WTC11 (cell line): ENCODE measurements at regions of chr6 and their contacts with region 1.

Region 1: GRCh38 chr6:2999618-3000557 is at the start of gene NQO2:
- DNase-seq: peak; percentile 97
- ATAC-seq: peak; percentile 88
- H3K4me3 Mint-ChIP-seq: peak within 1 kb of the TSS; percentile 90
- H3K27ac Mint-ChIP-seq: peak within 1 kb of the TSS; percentile 77
- H3K4me1 Mint-ChIP-seq: peaks cover 29% of the 10 kb centered on the region
- H3K27me3 Mint-ChIP-seq: no peaks in the 10 kb centered on the region; the same call in 1 of the 2 replicates
- CTCF ChIP-seq: no peak
- total RNA-seq, gene NQO2: 119 to 152 TPM (median 150 TPM) in 3 replicates

Region 2: DNA sequence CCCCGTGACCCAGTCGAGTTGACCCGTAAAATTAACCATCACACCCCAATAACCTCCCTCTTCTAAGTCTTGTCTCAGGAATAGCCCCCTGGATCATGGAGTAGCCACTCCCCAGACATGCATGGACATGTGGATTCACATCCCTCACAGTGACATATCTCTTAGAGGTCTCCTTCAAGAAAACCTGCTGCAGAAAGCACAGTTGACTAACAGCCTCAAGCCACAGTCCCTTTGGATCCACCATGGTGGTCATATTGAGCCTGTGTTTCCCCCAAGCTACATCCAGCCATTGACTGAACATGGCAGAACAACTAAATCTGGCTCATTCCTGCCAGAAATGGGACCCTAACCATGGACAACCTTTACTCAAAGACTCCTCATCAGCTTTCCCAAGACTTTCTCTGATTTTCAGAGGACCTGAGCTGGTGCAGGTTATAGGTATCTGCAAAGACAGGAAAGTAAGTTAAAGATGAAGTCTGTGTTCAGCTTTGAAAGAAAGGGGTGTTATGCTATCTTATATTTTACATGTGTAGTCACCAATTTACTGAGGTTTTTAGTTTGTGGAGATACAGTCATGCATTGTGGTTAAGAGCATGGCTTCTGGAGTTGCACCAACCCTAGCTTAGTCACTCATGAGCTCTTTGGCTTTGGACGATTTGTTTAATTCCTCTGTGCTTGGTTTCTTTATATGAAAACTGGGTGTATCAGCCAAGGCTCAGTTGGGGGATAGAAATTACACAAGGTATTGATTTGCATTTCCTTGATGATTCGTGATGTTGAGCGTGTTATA is 468.3 kb before region 1 on chr6:
- CTCF ChIA-PET with region 1: no interaction called
- POLR2A ChIA-PET with region 1: no interaction called
- DNase-seq: no peak
- ATAC-seq: no peak
- H3K4me3 Mint-ChIP-seq: no peak overlapping the region
- H3K27ac Mint-ChIP-seq: no peak overlapping the region
- H3K4me1 Mint-ChIP-seq: peaks cover 8% of the 10 kb centered on the region
- H3K27me3 Mint-ChIP-seq: no peaks in the 10 kb centered on the region; the same call in 1 of the 2 replicates
- CTCF ChIP-seq: no peak

Region 3: DNA sequence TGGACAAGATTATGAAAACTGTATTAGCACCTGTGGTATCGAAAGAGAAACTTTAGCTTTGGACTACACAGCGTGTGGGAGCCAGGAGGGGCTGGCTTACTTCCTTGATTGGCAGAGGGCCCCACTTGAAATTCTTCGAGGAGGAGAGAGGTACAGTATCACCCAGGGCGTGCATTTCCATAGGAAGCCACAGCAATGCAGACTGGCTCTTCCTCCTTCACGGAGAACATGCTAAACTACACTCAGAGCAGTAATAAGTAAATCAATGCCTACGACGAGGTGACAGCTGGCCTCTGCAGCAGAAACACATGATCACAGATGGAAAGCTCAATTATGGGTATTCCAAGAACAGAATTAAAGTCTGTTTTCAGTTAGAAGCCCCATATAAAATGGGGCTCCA is 293.3 kb before region 1 on chr6:
- CTCF ChIA-PET with region 1: no interaction called
- POLR2A ChIA-PET with region 1: no interaction called
- DNase-seq: no peak
- ATAC-seq: peak; percentile 72
- H3K4me3 Mint-ChIP-seq: no peak overlapping the region
- H3K27ac Mint-ChIP-seq: no peak overlapping the region
- H3K4me1 Mint-ChIP-seq: peaks cover 21% of the 10 kb centered on the region
- H3K27me3 Mint-ChIP-seq: peaks cover 3% of the 10 kb centered on the region; the same call in 1 of the 2 replicates
- CTCF ChIP-seq: no peak

Region 4: DNA sequence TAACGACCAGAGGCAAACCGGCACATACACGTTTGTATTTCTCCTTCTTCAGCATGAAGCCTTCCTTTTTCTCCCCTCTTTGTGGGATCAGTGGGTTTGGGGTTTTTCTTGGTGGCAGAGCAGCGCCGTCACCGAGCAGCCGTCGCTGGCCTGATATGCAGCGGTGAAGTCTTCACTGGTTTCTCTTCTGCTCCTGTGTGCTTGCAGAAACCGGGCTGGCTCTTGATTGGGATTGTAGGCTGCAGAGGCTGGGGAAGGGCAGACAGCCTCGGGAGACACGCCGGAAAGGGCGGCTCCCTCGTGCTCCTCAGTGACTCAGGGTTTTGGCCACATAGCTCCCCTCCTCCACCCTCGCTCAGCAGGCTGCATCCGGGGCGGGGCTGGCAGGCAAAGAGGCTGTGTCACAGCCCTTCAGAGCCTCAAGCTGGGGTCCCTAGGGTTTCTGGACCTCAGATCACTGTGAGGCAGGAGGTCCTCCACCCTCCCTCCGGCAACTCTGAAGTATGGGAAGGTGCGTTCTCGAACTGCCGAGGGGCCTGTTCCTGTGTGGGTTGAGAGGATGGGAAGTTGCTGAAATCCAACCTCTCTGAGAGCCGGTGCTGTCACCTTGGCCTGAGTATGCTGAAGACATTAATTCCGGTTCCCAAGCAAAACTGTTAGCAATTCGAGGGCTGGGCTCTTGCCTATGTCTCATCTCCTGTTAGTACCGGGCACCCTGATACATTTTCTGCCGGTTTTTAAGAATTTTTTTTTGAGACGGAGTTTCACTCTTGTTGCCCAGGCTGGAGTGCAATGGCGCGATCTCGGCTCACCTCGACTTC is 24.0 kb after region 1 on chr6:
- CTCF ChIA-PET with region 1: interaction called, 16 read pairs
- POLR2A ChIA-PET with region 1: interaction called, 8 read pairs
- DNase-seq: peak; percentile 77
- ATAC-seq: peak; percentile 84
- H3K4me3 Mint-ChIP-seq: peak overlapping the region; percentile 26
- H3K27ac Mint-ChIP-seq: peak overlapping the region; percentile 95
- H3K4me1 Mint-ChIP-seq: peaks cover 38% of the 10 kb centered on the region
- H3K27me3 Mint-ChIP-seq: peaks cover 2% of the 10 kb centered on the region; the same call in 1 of the 2 replicates
- CTCF ChIP-seq: no peak

Region 5: DNA sequence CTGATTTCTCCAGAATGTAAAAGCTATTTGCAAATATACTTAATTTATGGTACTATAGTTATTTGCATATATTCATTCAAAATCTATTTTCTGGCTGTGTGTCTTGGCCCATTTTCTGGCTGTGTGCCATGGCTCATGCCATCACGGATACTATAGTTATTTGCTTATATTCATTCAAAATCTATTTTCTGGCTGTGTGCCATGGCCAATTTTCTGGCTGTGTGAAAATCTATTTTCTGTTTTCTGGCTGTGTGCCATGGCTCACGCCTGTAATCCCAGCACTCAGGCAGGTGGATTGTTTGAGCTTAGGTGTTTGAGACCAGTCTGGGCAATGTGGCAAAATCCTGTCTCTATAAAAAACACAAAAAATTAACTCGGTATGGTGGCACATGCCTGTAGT is 39.5 kb after region 1 on chr6:
- CTCF ChIA-PET with region 1: interaction called, 11 read pairs
- POLR2A ChIA-PET with region 1: no interaction called
- DNase-seq: no peak
- ATAC-seq: no peak
- H3K4me3 Mint-ChIP-seq: no peak overlapping the region
- H3K27ac Mint-ChIP-seq: no peak overlapping the region
- H3K4me1 Mint-ChIP-seq: peaks cover 12% of the 10 kb centered on the region
- H3K27me3 Mint-ChIP-seq: peaks cover 3% of the 10 kb centered on the region; the same call in 1 of the 2 replicates
- CTCF ChIP-seq: no peak

Region 6: GRCh38 chr6:3052481-3053230 is 52.8 kb after region 1 on chr6:
- CTCF ChIA-PET with region 1: interaction called, 25 read pairs
- POLR2A ChIA-PET with region 1: interaction called, 22 read pairs
- DNase-seq: no peak
- ATAC-seq: no peak
- H3K4me3 Mint-ChIP-seq: peak overlapping the region; percentile 83
- H3K27ac Mint-ChIP-seq: no peak overlapping the region
- H3K4me1 Mint-ChIP-seq: peaks cover 33% of the 10 kb centered on the region
- H3K27me3 Mint-ChIP-seq: peaks cover 16% of the 10 kb centered on the region
- CTCF ChIP-seq: no peak

Region 7: GRCh38 chr6:3063733-3064700 is 64.1 kb after region 1 on chr6:
- CTCF ChIA-PET with region 1: interaction called, 15 read pairs
- POLR2A ChIA-PET with region 1: interaction called, 4 read pairs
- DNase-seq: peak; percentile 85
- ATAC-seq: peak; percentile 84
- H3K4me3 Mint-ChIP-seq: peak overlapping the region; percentile 86
- H3K27ac Mint-ChIP-seq: peak overlapping the region; percentile 67
- H3K4me1 Mint-ChIP-seq: peaks cover 7% of the 10 kb centered on the region
- H3K27me3 Mint-ChIP-seq: peaks cover 34% of the 10 kb centered on the region
- CTCF ChIP-seq: no peak